ENCODE measurements at regions of chr2 and their contacts with region 1.

Region 1: DNA sequence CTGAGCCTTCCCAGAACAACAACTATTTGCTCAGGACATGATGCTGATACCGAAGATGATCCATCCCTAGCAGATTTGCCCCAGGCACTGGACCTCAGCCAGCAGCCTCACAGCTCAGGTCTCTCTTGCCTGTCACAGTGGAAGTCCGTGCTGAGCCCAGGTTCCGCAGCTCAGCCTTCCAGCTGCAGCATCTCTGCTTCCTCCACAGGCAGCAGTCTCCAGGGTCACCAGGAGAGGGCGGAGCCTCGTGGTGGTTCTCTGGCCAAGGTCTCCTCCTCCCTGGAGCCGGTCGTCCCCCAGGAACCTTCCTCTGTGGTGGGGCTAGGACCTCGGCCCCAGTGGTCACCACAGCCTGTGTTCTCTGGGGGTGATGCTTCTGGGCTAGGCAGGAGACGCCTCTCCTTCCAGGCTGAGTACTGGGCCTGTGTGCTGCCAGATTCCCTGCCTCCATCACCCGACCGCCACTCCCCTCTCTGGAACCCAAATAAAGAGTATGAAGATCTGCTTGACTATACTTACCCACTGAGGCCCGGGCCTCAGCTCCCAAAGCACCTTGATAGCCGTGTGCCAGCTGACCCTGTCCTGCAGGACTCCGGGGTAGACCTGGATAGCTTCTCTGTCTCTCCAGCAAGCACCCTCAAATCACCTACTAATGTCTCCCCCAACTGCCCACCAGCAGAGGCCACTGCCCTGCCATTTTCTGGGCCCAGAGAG is 15.4 kb downstream of the CEP68 start:
- DNase-seq: peak; percentile 44
- H3K4me3 ChIP-seq: no peak overlapping the region
- H3K27ac ChIP-seq: no peak overlapping the region
- H3K4me1 ChIP-seq: peaks cover 35% of the 10 kb centered on the region
- H3K27me3 ChIP-seq: no peaks in the 10 kb centered on the region
- CTCF ChIP-seq: peak in 1 of 3 experiments; percentile 7
- POLR2A ChIP-seq: no peak

Region 2: DNA sequence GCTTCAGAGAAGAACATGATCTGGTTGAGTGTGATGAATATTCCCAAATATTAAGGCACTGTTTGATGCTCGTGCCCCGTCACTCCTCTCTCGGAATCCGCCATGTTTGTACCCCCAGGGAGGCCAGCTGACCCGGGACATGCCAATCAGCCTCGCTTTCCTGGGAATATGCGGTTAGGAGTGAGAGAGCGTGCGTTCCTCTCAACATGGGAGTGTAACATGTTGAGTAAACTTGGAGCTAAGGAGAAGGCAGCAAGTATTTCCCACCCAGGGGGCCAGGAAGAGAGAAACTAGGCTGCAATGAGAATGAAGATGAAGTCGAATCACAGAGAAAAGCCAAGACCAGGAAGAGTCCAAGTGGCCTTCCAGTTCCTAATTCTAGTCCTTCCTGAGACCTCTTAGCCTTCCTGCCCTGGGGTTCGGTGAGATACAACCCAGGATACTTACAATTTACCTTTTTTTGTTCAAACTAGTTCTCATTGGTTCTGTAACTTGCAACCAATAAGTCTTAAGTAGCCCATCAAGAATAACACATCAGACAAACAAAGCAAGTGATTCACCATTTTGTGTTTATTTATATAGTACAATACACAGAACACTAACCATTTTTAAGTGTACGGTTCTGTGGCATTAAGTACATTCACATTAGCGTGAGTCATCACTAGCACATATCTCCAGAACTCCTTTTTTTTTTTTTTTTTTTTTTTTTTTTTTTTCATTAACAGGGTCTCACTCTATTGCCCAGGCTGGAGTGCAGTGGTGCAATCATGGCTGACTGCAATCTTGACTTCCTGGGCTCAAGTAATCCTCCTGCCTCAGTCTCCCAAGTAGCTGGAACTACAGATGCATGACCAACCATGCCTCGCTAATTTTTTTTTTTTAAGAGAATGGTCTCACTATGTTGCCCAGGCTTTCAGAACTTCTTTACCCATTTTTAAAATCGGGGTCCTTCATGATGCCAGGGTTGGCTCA is 118.9 kb before region 1 on chr2:
- intact Hi-C with region 1: no loop called
- DNase-seq: no peak
- H3K4me3 ChIP-seq: no peak overlapping the region
- H3K27ac ChIP-seq: no peak overlapping the region
- H3K4me1 ChIP-seq: no peaks in the 10 kb centered on the region
- H3K27me3 ChIP-seq: no peaks in the 10 kb centered on the region
- CTCF ChIP-seq: no peak
- POLR2A ChIP-seq: no peak

Region 3: DNA sequence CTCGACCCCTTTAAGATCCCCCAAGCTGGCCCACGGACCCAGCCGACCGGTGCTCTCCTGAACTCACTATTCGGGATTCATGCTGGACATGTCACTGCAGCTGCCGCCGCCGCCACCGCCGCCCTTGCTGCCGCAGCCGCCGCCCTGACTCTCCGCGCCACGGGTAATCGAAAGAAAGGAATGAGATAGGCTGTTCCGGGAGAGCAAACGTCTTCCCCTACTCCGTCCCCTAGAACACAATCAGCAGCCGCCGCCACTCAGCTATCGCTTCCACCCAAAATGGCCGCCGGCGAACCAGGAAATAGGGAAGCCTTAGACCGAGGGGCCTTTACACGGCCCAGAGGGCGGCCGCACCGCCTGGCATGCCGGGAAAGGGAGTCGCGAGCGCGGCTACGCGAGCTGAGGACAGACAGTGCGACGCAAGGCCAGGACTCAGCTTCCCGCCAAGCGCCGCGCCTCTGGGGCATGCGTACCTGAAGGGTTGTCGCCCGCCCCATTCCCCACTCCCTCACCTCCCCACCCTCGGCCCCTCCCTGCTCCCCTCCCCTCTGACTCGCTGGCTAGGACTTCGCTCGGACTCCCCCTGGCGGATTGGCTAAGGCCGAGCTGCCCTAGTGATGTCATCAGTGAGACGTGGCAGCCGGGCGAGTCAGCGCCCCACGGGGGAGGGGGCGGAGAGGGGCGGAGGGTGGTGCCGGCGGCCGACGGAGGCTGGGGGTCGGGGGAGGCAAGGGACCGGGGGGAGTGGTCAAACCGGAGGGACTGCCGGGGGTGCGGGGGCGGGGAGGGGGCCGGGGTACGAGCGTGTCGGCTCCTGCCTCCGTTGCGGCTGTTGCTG is 58.4 kb after region 1 on chr2 and contains the start of gene RAB1A:
- intact Hi-C with region 1: loop called (anchors 2 kb)
- DNase-seq: peak; percentile 99
- H3K4me3 ChIP-seq: peak within 1 kb of the TSS; percentile 85 to 97
- H3K27ac ChIP-seq: peak within 1 kb of the TSS; percentile 95 to 99
- H3K4me1 ChIP-seq: peaks cover 42% of the 10 kb centered on the region
- H3K27me3 ChIP-seq: no peaks in the 10 kb centered on the region
- CTCF ChIP-seq: peak; percentile 34 to 62 (median 34)
- POLR2A ChIP-seq: peak; percentile 80
- total RNA-seq, gene RAB1A: 82.0 to 113 TPM

Region 4: GRCh38 chr2:65390134-65390533 is 318.5 kb after region 1 on chr2:
- intact Hi-C with region 1: no loop called
- DNase-seq: no peak
- H3K4me3 ChIP-seq: no peak overlapping the region
- H3K27ac ChIP-seq: no peak overlapping the region
- H3K4me1 ChIP-seq: no peaks in the 10 kb centered on the region
- H3K27me3 ChIP-seq: no peaks in the 10 kb centered on the region
- CTCF ChIP-seq: no peak
- POLR2A ChIP-seq: no peak

Measured in testis (tissue), 5 donors.